Activated CD4-positive, alpha-beta T cell treated with anti-CD3 and anti-CD28 coated beads for 36 hours (primary cell): ENCODE measurements at regions of chr3 and their contacts with region 1.

Region 1: DNA sequence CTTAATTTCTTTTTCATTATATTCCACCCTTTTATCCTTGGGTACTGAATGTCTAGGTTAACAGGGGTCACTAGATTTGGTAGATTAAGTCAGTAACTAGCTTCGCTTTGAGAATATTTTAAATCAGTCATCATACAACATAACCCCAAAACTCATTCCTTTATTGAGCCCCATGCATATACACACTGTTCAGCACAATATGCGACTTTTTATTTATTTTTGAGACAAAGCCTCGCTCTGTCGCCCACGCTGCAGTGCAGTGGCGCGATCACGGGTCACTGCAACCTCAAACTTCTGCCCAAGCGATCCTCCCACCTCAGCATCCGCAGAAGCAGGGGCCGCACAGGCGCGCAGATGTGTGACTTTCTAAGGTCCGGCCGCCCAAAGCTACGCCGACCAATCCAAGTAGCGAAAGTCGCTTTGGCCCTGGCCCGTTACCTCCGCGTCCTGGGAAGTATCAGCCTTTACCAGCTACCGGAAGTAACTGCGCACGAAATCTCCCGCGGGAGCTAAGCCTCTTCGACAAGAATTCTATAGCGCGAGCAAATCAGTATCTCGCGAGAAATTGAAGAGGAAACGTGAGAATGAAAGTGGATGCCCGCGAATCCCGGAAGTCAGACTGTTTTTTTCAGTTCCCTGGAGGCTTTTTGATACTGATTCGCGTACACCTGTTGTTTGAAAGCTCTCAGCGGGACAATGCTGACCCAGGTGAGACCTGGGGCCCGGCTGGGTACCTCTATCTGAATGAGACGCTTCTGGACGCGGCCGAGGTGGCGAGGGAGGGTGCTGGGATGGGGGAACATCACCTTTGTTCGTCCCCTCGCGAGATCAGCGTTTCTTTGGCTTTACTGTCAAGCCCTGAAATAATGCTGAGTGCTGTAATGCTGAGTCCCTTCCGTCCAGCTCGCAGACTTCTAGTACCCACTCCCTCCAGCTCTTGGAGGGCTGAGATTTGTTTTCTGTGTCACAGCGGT is at the starts of genes DHFR2 and NSUN3:
- DNase-seq: peak; percentile 88
- ATAC-seq: peak; percentile 87
- H3K4me3 Mint-ChIP-seq: peak within 1 kb of the TSS; percentile 92
- H3K27ac Mint-ChIP-seq: peak within 1 kb of the TSS; percentile 99
- H3K4me1 Mint-ChIP-seq: peaks cover 43% of the 10 kb centered on the region
- H3K27me3 Mint-ChIP-seq: no peaks in the 10 kb centered on the region
- total RNA-seq, gene DHFR2: 7.4 to 10.3 TPM
- total RNA-seq, gene NSUN3: 15.4 to 17.1 TPM

Region 2: DNA sequence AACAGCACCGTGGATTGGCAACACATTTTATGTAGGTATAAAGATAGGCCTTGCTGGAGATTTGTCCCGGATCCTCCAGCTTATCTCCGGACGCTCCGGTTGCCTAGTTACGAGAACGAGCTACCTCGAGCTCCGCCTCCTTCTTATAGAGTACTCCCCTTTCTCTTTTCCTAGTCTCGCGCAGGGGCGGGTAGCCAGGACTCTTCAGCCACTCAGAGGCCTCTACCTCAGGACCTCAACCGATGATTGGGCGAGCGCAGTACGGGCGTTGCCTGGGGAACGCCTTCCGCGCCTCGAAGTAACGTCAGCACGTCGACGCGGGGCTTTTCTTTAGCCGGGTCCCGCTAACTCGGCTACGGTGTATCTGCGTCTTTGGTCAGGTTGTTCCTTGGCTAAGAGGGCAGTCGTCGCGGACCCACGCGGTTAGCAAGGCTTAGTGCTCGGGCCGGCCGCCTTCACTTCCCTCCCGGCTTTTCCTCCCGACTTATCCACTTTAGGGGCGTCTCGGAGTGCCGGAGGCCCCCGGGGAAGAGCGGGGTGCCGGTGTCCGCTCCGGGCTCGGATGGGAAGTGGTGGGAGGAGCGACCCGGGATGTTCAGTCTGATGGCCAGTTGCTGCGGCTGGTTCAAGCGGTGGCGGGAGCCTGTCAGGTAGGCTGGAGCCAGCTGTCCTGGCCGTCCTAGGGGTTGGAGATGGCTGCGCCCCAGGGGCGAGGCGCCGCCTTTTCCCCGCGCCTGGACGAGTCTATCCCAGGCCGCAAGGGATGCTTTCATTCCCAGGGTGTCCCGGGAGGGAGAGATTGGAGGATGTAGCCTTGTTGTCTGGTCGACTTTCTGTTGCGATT is 82.7 kb before region 1 on chr3 and contains the start of gene ARL13B:
- CTCF ChIA-PET with region 1: no interaction called
- POLR2A ChIA-PET with region 1: interaction called, 5 read pairs
- intact Hi-C with region 1: loop called in 1 of 2 experiments (anchors 1 kb)
- DNase-seq: peak; percentile 96
- ATAC-seq: peak; percentile 100
- H3K4me3 Mint-ChIP-seq: peak within 1 kb of the TSS; percentile 82
- H3K27ac Mint-ChIP-seq: peak within 1 kb of the TSS; percentile 51
- H3K4me1 Mint-ChIP-seq: peaks cover 16% of the 10 kb centered on the region
- H3K27me3 Mint-ChIP-seq: peaks cover 2% of the 10 kb centered on the region
- total RNA-seq, gene ARL13B: 8.7 to 11.2 TPM

Region 3: GRCh38 chr3:94036909-94037507 is 25.7 kb before region 1 on chr3:
- CTCF ChIA-PET with region 1: interaction called, 7 read pairs
- POLR2A ChIA-PET with region 1: no interaction called
- intact Hi-C with region 1: loop called in 1 of 2 experiments (anchors 2 kb)
- DNase-seq: no peak
- ATAC-seq: peak; percentile 49
- H3K4me3 Mint-ChIP-seq: no peak overlapping the region
- H3K27ac Mint-ChIP-seq: no peak overlapping the region
- H3K4me1 Mint-ChIP-seq: no peaks in the 10 kb centered on the region
- H3K27me3 Mint-ChIP-seq: no peaks in the 10 kb centered on the region